Ovary (tissue), 10 donors: ENCODE measurements at regions of chr14 and their contacts with region 1.

Region 1: GRCh38 chr14:75278422-75279161 is at the start of gene FOS:
- DNase-seq: peak; percentile 92 to 97 (median 93)
- H3K4me3 ChIP-seq: peak within 1 kb of the TSS; percentile 80
- H3K27ac ChIP-seq: peak within 1 kb of the TSS; percentile 97 to 99
- H3K4me1 ChIP-seq: peaks cover 10% of the 10 kb centered on the region
- H3K27me3 ChIP-seq: no peaks in the 10 kb centered on the region
- CTCF ChIP-seq: peak in 1 of 3 donors; percentile 30
- EP300 ChIP-seq: peak; percentile 88
- POLR2A ChIP-seq: peak; percentile 100
- total RNA-seq, gene FOS: 115 to 2,019 (median 178) TPM

Region 2: GRCh38 chr14:75176142-75176820 is 102.3 kb before region 1 on chr14 and contains the start of gene TMED10:
- intact Hi-C with region 1: loop called in 1 of 4 experiments (anchors 5 kb)
- DNase-seq: peak; percentile 87 to 93 (median 91)
- H3K4me3 ChIP-seq: peak within 1 kb of the TSS; percentile 92
- H3K27ac ChIP-seq: peak within 1 kb of the TSS; percentile 62 to 93
- H3K4me1 ChIP-seq: peaks cover 8% of the 10 kb centered on the region
- H3K27me3 ChIP-seq: no peaks in the 10 kb centered on the region
- CTCF ChIP-seq: no peak
- EP300 ChIP-seq: peak; percentile 13
- POLR2A ChIP-seq: peak; percentile 82
- total RNA-seq, gene TMED10: 172 to 446 (median 287) TPM

Region 3: DNA sequence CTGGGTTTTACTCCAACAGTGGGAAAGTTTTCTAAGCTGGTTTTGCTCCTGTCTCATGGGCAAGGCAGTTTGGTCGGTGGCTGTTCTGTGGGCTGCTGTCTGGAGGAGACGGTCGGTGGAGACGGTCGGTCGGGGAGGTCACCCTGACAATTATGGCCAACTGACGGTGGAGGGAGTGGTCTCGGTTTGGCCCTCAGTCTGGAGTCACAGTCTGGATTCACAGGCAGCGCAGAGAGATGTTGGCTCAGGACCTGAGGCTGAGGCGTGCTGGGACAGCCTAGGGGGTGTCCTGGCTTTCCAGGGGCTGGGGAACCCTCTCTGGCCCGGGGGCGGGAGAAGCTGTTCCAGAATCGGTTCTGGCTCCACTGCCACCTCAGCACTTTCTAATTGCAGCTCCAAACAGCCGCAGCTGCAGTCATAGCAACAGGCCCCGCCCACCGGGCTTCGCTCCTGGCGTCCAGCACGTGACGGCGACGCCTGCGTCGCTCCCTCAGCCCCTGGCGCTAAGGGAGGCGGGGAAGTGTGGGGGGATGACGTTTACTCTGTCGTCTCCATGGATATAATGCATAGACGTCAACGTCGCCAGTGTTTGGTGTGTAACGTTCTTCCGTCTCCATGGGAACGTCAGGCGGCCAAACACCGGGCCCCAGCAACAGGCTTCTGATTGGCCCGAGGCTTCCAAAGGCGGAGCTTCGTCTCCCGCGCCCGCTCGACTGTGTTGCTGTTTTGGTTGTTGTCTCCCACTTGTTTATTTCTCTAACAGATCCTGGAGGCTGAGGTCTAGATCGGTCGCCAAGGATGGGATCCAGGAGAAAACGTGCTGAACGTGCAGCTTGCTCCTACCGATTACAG is 19.8 kb before region 1 on chr14:
- intact Hi-C with region 1: loop called in 1 of 4 experiments (anchors 1 kb)
- DNase-seq: peak; percentile 97 to 100 (median 99)
- H3K4me3 ChIP-seq: peak overlapping the region; percentile 53
- H3K27ac ChIP-seq: peak overlapping the region; percentile 88 to 89
- H3K4me1 ChIP-seq: peaks cover 3% of the 10 kb centered on the region
- H3K27me3 ChIP-seq: no peaks in the 10 kb centered on the region
- CTCF ChIP-seq: peak in 1 of 3 donors; percentile 12
- EP300 ChIP-seq: peak; percentile 96
- POLR2A ChIP-seq: peak; percentile 95

Region 4: DNA sequence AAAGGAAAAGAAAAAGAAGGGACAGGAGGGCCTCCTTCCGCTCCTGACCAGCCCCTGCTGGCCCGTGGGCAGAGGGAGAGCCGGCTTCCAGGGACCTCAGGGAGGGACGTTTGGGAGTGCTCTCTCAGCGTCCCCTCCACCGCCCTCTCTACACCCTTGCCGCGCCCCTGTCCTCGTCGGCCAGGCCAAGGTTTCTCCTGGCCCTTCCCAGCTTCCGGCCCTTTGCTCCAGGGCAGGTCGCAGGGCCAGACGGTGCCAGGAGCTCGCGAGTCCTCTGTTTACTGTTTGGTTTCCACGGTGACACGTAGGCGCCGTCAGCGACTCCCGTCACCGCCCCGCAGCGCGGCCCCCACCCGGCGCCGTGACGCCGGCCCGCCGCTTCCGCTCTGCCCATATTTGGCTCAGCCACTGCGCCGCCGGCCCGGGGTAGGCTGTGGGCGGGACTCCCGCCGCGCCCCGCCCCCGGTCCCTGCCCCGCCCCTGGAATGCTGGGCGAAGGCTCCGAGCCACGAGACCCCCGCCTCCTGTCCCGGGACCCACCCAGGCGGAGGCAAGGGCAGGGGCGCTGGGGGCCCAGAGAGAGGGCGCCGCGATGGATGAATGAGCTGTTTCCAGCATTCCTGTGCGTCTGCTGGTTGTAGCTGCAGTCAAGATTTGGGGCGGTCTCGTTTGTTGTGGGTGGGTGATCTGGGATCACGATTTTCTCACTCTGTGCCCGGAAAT is 15.5 kb after region 1 on chr14:
- intact Hi-C with region 1: loop called in 1 of 4 experiments (anchors 2 kb)
- DNase-seq: peak; percentile 94 to 97 (median 97)
- H3K4me3 ChIP-seq: peak overlapping the region; percentile 74
- H3K27ac ChIP-seq: peak overlapping the region; percentile 77 to 85
- H3K4me1 ChIP-seq: peaks cover 14% of the 10 kb centered on the region
- H3K27me3 ChIP-seq: no peaks in the 10 kb centered on the region
- CTCF ChIP-seq: peak in 1 of 3 donors; percentile 10
- EP300 ChIP-seq: peak; percentile 86
- POLR2A ChIP-seq: peak; percentile 50